Heart left ventricle (tissue), 16 donors: ENCODE measurements at regions of chr15 and their contacts with region 1.

Region 1: GRCh38 chr15:61155741-61156700 is 73.1 kb downstream of the RORA start:
- DNase-seq: peak in 4 of 5 donors; percentile 57 to 74 (median 62)
- ATAC-seq: peak; percentile 55 to 87 (median 78)
- H3K4me3 ChIP-seq: peak overlapping the region in 1 of 12 donors; percentile 2
- H3K27ac ChIP-seq: peak overlapping the region; percentile 17 to 78 (median 55)
- H3K4me1 ChIP-seq: peaks cover 0 to 34% (median 0%) of the 10 kb centered on the region in 12 donors
- H3K27me3 ChIP-seq: no peaks in the 10 kb centered on the region
- CTCF ChIP-seq: no peak
- POLR2A ChIP-seq: no peak

Region 2: GRCh38 chr15:61084944-61085367 is 71.1 kb before region 1 on chr15:
- intact Hi-C with region 1: loop called in 1 of 10 experiments (anchors 5 kb)
- DNase-seq: peak in 3 of 5 donors; percentile 21 to 40 (median 25)
- ATAC-seq: peak in 3 of 4 donors; percentile 50 to 73 (median 67)
- H3K4me3 ChIP-seq: no peak overlapping the region
- H3K27ac ChIP-seq: peak overlapping the region in 1 of 12 donors; percentile 54
- H3K4me1 ChIP-seq: peaks cover 0 to 30% (median 3%) of the 10 kb centered on the region in 12 donors
- H3K27me3 ChIP-seq: no peaks in the 10 kb centered on the region
- CTCF ChIP-seq: no peak
- POLR2A ChIP-seq: no peak

Region 3: DNA sequence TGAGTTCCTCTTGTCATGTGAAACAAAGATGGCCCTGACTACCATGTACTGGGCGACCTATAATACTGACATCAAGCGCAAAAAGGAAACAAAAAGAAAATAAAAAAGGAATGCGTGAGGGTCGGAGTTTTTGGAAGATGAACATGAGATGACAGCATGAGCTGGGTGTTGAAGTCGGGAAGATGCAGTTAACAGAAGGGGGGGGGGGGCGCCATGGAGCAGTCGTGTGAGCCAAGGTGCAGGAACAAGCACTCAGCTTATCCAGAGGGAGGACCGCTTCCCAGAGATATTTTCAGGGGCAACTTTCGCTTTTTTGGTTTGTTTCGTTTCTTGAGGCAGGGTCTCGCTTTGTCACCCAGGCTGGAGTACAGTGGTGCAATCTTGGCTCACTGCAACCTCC is 37.1 kb before region 1 on chr15:
- intact Hi-C with region 1: no loop called
- DNase-seq: no peak
- ATAC-seq: no peak
- H3K4me3 ChIP-seq: no peak overlapping the region
- H3K27ac ChIP-seq: no peak overlapping the region
- H3K4me1 ChIP-seq: peaks cover 0 to 14% (median 0%) of the 10 kb centered on the region in 12 donors
- H3K27me3 ChIP-seq: no peaks in the 10 kb centered on the region
- CTCF ChIP-seq: no peak
- POLR2A ChIP-seq: no peak

Region 4: GRCh38 chr15:61227269-61227949 is 71.4 kb after region 1 on chr15:
- intact Hi-C with region 1: loop called in 1 of 10 experiments (anchors 5 kb)
- DNase-seq: peak in 3 of 5 donors; percentile 21 to 26 (median 25)
- ATAC-seq: peak; percentile 19 to 62 (median 29)
- H3K4me3 ChIP-seq: peak overlapping the region; percentile 53 to 95 (median 70)
- H3K27ac ChIP-seq: peak overlapping the region in 6 of 12 donors; percentile 9 to 65 (median 50)
- H3K4me1 ChIP-seq: peaks cover 0 to 24% (median 7%) of the 10 kb centered on the region in 12 donors
- H3K27me3 ChIP-seq: peaks cover 0 to 47% (median 0%) of the 10 kb centered on the region in 9 donors
- CTCF ChIP-seq: no peak
- POLR2A ChIP-seq: no peak